Activated CD4-positive, alpha-beta T cell treated with anti-CD3 and anti-CD28 coated beads, Interleukin-2, amount 10 ng/mL, durations not matched to agents 24 days and 14 days (primary cell): ENCODE measurements at regions of chr4 and their contacts with region 1.

Region 1: DNA sequence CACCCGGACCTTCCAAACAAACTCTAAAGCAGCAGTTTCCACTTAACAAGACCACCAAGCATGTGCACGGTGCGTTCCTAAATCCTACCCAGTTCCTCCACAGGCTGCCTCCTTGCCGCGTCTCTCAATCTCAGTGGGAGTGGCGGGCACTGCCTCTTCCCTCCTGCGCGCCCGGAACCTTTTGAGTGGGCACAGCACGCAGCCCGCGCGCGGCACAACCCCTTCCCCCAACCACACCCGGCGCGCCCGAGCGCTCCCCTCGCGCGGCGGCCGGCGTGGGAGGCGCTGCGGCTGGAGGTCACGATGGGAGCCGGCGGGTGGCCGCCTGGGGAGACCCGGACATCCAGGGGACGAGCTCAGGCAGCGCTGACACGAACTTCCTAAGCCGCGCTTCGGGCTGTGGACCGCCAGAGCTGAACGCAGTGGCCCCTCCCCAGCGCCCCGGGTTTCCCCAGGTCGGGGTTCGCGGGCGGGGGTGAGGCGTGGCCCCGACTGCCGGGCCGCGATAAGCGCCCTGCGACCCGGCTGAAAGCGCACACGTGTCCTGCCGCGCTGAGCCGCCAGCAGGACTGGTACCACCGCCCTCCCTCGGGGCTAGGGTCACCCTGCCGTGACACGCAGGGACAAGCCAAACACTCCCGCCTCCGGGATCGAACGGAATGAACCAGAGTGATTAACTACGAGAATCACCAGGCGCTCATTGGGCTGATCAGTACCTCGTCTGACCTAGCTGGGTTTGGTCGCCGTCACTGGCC is at the start of gene ABCG2:
- DNase-seq: peak; percentile 86
- H3K4me3 Mint-ChIP-seq: peak within 1 kb of the TSS; percentile 85
- H3K27ac Mint-ChIP-seq: peak within 1 kb of the TSS; percentile 75
- H3K4me1 Mint-ChIP-seq: peaks cover 14% of the 10 kb centered on the region
- H3K27me3 Mint-ChIP-seq: peaks cover 23% of the 10 kb centered on the region
- total RNA-seq, gene ABCG2: 0.56 and 0.76 TPM in 2 replicates

Region 2: GRCh38 chr4:87895964-87896621 is 262.6 kb before region 1 on chr4:
- intact Hi-C with region 1: loop called (anchors 5 kb)
- DNase-seq: peak; percentile 63
- H3K4me3 Mint-ChIP-seq: no peak overlapping the region
- H3K27ac Mint-ChIP-seq: peak overlapping the region; percentile 5
- H3K4me1 Mint-ChIP-seq: peaks cover 11% of the 10 kb centered on the region
- H3K27me3 Mint-ChIP-seq: peaks cover 30% of the 10 kb centered on the region

Region 3: GRCh38 chr4:88007304-88008121 is 151.2 kb before region 1 on chr4 and contains the start of gene PKD2:
- intact Hi-C with region 1: loop called (anchors 2 kb)
- DNase-seq: peak; percentile 96
- H3K4me3 Mint-ChIP-seq: peak within 1 kb of the TSS; percentile 94
- H3K27ac Mint-ChIP-seq: peak within 1 kb of the TSS; percentile 88
- H3K4me1 Mint-ChIP-seq: peaks cover 31% of the 10 kb centered on the region
- H3K27me3 Mint-ChIP-seq: peaks cover 16% of the 10 kb centered on the region
- total RNA-seq, gene PKD2: 10.1 and 12.3 TPM in 2 replicates

Region 4: DNA sequence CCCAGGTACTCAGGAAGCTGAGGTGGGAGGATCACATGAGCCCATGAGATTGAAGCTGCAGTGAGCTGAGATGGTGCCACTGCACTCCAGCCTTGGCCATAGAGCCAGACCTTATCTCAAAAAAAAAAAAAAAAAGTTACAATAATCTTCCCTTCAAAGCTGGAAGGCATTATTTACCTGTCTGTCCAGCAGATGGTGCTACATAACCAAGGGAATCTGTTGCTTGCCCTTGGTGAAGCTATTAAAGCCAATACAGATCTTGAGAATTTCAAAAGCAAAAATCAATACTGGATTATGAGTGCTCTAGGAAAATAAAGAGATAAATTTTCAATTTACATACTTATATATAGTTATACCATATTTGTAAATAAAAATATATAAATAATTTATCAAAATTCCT is 125.4 kb before region 1 on chr4:
- intact Hi-C with region 1: loop called (anchors 2 kb)
- DNase-seq: peak; percentile 84
- H3K4me3 Mint-ChIP-seq: no peak overlapping the region
- H3K27ac Mint-ChIP-seq: no peak overlapping the region
- H3K4me1 Mint-ChIP-seq: peaks cover 5% of the 10 kb centered on the region
- H3K27me3 Mint-ChIP-seq: no peaks in the 10 kb centered on the region

Region 5: DNA sequence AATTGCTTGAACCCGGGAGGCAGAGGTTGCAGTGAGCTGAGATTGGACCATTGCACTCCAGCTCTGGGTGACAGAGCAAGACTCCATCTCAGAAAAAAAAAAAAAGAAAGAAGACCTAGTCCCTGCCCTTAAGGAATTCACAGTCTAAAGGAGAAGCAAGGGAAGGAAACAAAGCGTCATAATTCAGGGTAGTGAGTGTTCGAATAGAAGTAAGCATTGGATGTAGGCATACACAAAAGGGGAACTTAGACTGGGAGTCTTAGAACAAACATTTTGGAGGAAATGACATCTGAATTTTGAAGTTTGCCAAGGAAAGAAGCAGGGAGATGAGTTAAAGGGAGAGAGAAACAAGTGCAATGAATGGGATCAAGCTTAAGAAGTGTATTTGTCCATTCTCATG is 93.3 kb after region 1 on chr4:
- intact Hi-C with region 1: no loop called
- DNase-seq: no peak
- H3K4me3 Mint-ChIP-seq: no peak overlapping the region
- H3K27ac Mint-ChIP-seq: no peak overlapping the region
- H3K4me1 Mint-ChIP-seq: no peaks in the 10 kb centered on the region
- H3K27me3 Mint-ChIP-seq: peaks cover 5% of the 10 kb centered on the region

Region 6: DNA sequence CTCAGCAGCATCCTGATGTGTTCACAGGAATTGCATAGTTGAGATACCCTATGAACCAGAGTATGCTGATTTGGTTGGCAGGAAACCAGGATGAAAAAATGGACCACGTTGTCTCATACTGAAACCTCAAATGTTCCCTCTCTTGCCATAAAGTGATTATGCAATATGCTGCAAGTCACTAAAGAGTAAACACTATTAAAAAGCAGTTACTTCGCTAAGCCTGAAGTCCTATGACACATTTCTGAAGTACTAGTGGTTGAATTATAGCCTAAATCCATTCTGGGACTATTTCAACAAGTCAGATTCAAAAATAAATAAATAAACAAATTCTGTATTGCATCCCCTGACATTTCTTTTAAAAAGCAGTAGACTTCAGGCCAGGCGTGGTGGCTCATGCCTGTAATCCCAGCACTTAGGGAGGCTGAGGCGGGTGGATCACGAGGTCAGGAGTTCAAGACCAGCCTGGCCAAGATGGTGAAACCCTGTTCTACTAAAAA is 645.0 kb after region 1 on chr4:
- intact Hi-C with region 1: loop called (anchors 10 kb)
- DNase-seq: peak; percentile 67
- H3K4me3 Mint-ChIP-seq: no peak overlapping the region
- H3K27ac Mint-ChIP-seq: no peak overlapping the region
- H3K4me1 Mint-ChIP-seq: peaks cover 17% of the 10 kb centered on the region
- H3K27me3 Mint-ChIP-seq: peaks cover 21% of the 10 kb centered on the region